Heart left ventricle (tissue), 16 donors: ENCODE measurements at regions of chr1 and their contacts with region 1.

Region 1: GRCh38 chr1:217333939-217334338 is 297.0 kb downstream of the GPATCH2 start:
- DNase-seq: no peak
- ATAC-seq: peak in 1 of 4 donors; percentile 31
- H3K4me3 ChIP-seq: no peak overlapping the region
- H3K27ac ChIP-seq: no peak overlapping the region
- H3K4me1 ChIP-seq: peaks cover 0 to 9% (median 2%) of the 10 kb centered on the region in 12 donors
- H3K27me3 ChIP-seq: no peaks in the 10 kb centered on the region
- CTCF ChIP-seq: peak in 11 of 12 donors; percentile 12 to 51 (median 40)
- POLR2A ChIP-seq: no peak

Region 2: DNA sequence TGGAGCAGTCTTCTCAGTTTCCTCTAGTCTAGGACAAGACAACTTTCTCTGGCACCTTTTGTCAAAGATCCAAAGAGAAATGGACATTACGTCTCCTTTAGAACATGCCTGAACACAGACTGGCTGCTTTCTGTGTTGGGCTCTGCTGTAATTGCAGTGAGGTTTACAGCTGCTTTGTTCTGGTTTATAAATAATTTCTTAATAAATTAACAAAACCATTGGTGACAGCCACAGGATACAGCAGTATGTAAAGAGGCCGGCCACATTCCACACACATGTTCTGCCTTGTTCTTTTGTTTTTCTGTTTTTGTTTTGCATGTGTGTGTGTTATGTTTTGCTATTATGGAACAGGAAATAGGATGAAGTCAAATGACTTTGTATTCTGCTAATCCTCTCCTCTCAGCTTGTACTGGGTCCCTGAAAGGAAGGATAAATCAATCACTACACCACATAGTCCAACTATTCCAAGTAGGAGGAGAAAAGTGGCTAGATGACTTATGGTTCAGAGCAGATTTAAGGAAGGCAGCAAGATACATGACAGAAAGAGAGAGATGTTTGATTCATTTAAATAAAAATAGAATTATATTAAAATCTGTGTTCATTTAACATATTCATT is 449.2 kb before region 1 on chr1:
- intact Hi-C with region 1: loop called in 1 of 10 experiments (anchors 5 kb)
- DNase-seq: no peak
- ATAC-seq: no peak
- H3K4me3 ChIP-seq: no peak overlapping the region
- H3K27ac ChIP-seq: no peak overlapping the region
- H3K4me1 ChIP-seq: peaks cover 0 to 10% (median 0%) of the 10 kb centered on the region in 12 donors
- H3K27me3 ChIP-seq: no peaks in the 10 kb centered on the region
- CTCF ChIP-seq: no peak
- POLR2A ChIP-seq: no peak

Region 3: DNA sequence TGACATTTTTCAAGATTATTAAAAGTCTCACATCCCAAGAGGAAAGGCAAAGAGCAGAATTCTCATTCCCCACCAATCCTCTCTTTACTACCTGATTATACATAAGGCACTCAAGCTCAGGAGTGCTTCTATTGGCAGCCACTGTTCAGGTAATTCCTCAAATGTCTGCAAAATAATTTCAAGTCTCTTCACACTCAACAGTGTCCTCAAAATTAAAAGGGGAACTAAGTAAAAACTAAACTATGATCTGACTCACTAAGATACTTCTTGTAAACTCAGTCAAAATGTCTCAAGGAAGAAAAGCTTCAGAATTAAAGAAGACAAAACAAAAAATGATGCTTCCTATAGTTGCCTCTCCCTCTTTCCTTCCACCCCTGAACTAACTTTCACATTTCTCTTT is 161.3 kb after region 1 on chr1:
- intact Hi-C with region 1: no loop called
- DNase-seq: no peak
- ATAC-seq: no peak
- H3K4me3 ChIP-seq: no peak overlapping the region
- H3K27ac ChIP-seq: no peak overlapping the region
- H3K4me1 ChIP-seq: no peaks in the 10 kb centered on the region
- H3K27me3 ChIP-seq: no peaks in the 10 kb centered on the region
- CTCF ChIP-seq: no peak
- POLR2A ChIP-seq: no peak